Transverse colon (tissue), 4 donors: ENCODE measurements at regions of chr1 and their contacts with region 1.

Region 1: GRCh38 chr1:183304440-183305107 is 113.6 kb downstream of the NMNAT2 start:
- DNase-seq: no peak
- H3K4me3 ChIP-seq: no peak overlapping the region
- H3K27ac ChIP-seq: no peak overlapping the region
- H3K4me1 ChIP-seq: peaks cover 0 to 14% (median 6%) of the 10 kb centered on the region in 4 donors
- H3K27me3 ChIP-seq: no peaks in the 10 kb centered on the region
- CTCF ChIP-seq: no peak
- EP300 ChIP-seq: no peak
- POLR2A ChIP-seq: no peak

Region 2: GRCh38 chr1:182041615-182042014 is 1263.0 kb before region 1 on chr1:
- in situ Hi-C with region 1: no loop called
- intact Hi-C with region 1: loop called (anchors 5 kb)
- DNase-seq: no peak
- H3K4me3 ChIP-seq: no peak overlapping the region
- H3K27ac ChIP-seq: no peak overlapping the region
- H3K4me1 ChIP-seq: no peaks in the 10 kb centered on the region
- H3K27me3 ChIP-seq: no peaks in the 10 kb centered on the region
- CTCF ChIP-seq: no peak
- EP300 ChIP-seq: no peak
- POLR2A ChIP-seq: no peak

Region 3: GRCh38 chr1:183349201-183349711 is 44.7 kb after region 1 on chr1:
- in situ Hi-C with region 1: no loop called
- intact Hi-C with region 1: no loop called
- DNase-seq: no peak
- H3K4me3 ChIP-seq: no peak overlapping the region
- H3K27ac ChIP-seq: peak overlapping the region in 3 of 4 donors; percentile 69 to 77 (median 70)
- H3K4me1 ChIP-seq: peaks cover 0 to 7% (median 2%) of the 10 kb centered on the region in 4 donors
- H3K27me3 ChIP-seq: no peaks in the 10 kb centered on the region
- CTCF ChIP-seq: no peak
- EP300 ChIP-seq: no peak
- POLR2A ChIP-seq: no peak